K562 (cell line): ENCODE measurements at regions of chr1 and their contacts with region 1.

Region 1: DNA sequence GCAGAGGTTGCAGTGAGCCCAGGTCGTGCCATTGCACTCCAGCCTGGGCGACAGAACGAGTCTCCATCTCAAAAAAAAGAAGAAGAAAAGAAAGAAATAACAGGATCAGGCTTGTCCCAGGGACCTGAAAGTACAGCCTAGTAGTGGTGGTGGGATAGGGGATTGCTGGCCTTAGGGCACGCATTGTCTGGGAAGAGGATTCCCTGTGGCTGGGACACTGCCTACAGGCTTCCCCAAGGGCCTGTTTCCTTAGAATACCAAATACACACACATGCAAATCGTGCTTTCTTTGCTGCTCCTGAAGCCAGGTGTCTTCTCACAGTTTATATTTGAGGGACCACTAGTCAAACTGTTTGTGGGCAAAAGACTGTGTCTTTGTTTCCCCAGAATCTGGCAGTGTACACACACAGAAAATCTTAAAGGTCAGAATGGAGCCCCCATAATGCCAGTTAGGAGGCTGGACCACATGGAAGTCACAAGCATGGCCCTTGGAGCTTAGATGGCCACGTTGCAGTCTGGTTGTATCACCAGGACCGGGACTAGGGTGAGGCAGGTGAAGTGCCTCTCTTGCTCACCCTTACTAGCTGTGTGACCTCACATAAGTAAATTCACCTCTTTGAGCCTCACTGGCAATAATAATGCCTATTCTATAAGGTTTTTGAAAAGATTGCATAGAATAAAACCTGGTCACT is 12.7 kb upstream of the ASAP3 start:
- DNase-seq: no peak
- ATAC-seq: peak; percentile 46
- H3K4me3 ChIP-seq: no peak overlapping the region
- H3K27ac ChIP-seq: no peak overlapping the region
- H3K4me1 ChIP-seq: peaks cover 0 to 4% of the 10 kb centered on the region in 2 experiments; a peak in 1 of 5 replicates
- H3K27me3 ChIP-seq: no peaks in the 10 kb centered on the region
- CTCF ChIP-seq: no peak
- EP300 ChIP-seq: no peak
- POLR2A ChIP-seq: no peak
- RAD21 ChIP-seq: no peak

Region 2: GRCh38 chr1:23263380-23263887 is 233.2 kb before region 1 on chr1:
- CTCF ChIA-PET with region 1: no interaction called
- POLR2A ChIA-PET with region 1: no interaction called
- in situ Hi-C with region 1: no loop called
- intact Hi-C with region 1: no loop called
- DNase-seq: no peak
- ATAC-seq: no peak; the same call in 2 of the 3 replicates
- H3K4me3 ChIP-seq: no peak overlapping the region
- H3K27ac ChIP-seq: no peak overlapping the region
- H3K4me1 ChIP-seq: peaks cover 0 to 10% of the 10 kb centered on the region in 2 experiments; a peak in 3 of 5 replicates
- H3K27me3 ChIP-seq: no peaks in the 10 kb centered on the region
- CTCF ChIP-seq: no peak
- EP300 ChIP-seq: no peak
- POLR2A ChIP-seq: no peak
- RAD21 ChIP-seq: no peak

Region 3: GRCh38 chr1:23362218-23362713 is 134.4 kb before region 1 on chr1:
- CTCF ChIA-PET with region 1: no interaction called
- POLR2A ChIA-PET with region 1: no interaction called
- in situ Hi-C with region 1: no loop called
- intact Hi-C with region 1: no loop called
- DNase-seq: peak in 2 of 4 experiments; percentile 8 to 40
- ATAC-seq: 0 out of 3 replicates have a peak, but pooled peaks have one; percentile 25
- H3K4me3 ChIP-seq: no peak overlapping the region
- H3K27ac ChIP-seq: no peak overlapping the region
- H3K4me1 ChIP-seq: peaks cover 0 to 10% of the 10 kb centered on the region in 2 experiments; a peak in 3 of 5 replicates
- H3K27me3 ChIP-seq: no peaks in the 10 kb centered on the region
- CTCF ChIP-seq: no peak
- EP300 ChIP-seq: no peak
- POLR2A ChIP-seq: peak; percentile 37; the same call in 1 of the 2 replicates
- RAD21 ChIP-seq: no peak

Region 4: GRCh38 chr1:23484253-23485001 is 12.2 kb before region 1 on chr1:
- CTCF ChIA-PET with region 1: no interaction called
- POLR2A ChIA-PET with region 1: interaction called, 23 read pairs
- in situ Hi-C with region 1: no loop called
- intact Hi-C with region 1: no loop called
- DNase-seq: peak; percentile 98 to 99 (median 98)
- ATAC-seq: peak; percentile 93
- H3K4me3 ChIP-seq: peak overlapping the region; percentile 68
- H3K27ac ChIP-seq: peak overlapping the region; percentile 64; the same call in 2 of the 3 replicates
- H3K4me1 ChIP-seq: peaks cover 34 to 37% of the 10 kb centered on the region in 2 experiments
- H3K27me3 ChIP-seq: no peaks in the 10 kb centered on the region
- CTCF ChIP-seq: no peak
- EP300 ChIP-seq: no peak
- POLR2A ChIP-seq: peak; percentile 64
- RAD21 ChIP-seq: no peak

Region 5: GRCh38 chr1:23524716-23525401 is 28.2 kb after region 1 on chr1:
- CTCF ChIA-PET with region 1: no interaction called
- POLR2A ChIA-PET with region 1: interaction called, 23 read pairs
- in situ Hi-C with region 1: loop called (anchors 5 kb)
- intact Hi-C with region 1: no loop called
- DNase-seq: peak in 2 of 4 experiments; percentile 60 to 65
- ATAC-seq: no peak
- H3K4me3 ChIP-seq: no peak overlapping the region
- H3K27ac ChIP-seq: no peak overlapping the region
- H3K4me1 ChIP-seq: peaks cover 40 to 46% of the 10 kb centered on the region in 2 experiments
- H3K27me3 ChIP-seq: no peaks in the 10 kb centered on the region
- CTCF ChIP-seq: no peak
- EP300 ChIP-seq: no peak
- POLR2A ChIP-seq: no peak
- RAD21 ChIP-seq: no peak

Region 6: DNA sequence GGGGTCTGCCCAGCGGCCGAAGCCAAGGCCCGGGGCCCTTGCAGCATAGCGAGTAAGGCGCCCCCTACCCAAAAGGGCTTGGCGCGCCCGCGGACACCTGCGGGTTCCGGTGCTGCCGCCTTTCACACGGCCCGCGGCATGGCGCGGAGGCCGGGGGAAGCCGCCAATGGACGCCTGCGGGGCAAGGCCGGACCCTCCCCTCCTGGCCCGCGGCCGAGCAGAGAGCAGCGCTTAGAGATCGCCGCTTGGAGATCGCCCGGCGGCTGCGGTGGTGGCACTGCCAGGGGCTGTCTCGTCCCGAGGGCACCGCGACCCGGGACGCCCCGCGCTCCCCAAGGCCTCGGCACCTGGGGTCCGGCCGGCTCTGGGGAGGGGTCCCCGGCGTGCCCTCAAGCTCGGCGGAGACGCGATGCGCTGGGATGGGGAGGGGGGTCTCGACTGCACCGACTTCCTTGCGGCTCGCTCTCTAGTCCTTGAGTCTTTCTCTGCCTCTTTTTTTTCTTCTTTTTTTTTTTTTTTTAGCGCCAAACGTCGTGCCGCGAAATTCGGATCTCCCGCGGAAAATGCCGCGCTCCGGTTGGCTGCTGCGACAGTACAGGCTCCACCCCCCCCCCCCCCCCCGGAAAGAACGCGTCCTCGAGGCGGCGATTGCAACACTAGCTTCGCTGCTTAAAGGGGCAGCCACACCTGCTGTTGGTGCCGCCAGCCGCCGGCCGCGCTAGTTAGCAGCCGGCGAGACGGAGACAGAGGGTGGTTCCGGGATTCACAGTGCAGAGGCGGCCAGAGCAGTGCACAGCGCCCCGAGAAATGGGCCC is 34.3 kb after region 1 on chr1 and contains the start of gene E2F2:
- CTCF ChIA-PET with region 1: no interaction called
- POLR2A ChIA-PET with region 1: interaction called, 23 read pairs
- in situ Hi-C with region 1: loop called (anchors 5 kb)
- intact Hi-C with region 1: no loop called
- DNase-seq: peak; percentile 97 to 98 (median 97)
- ATAC-seq: peak; percentile 79
- H3K4me3 ChIP-seq: peak within 1 kb of the TSS; percentile 55
- H3K27ac ChIP-seq: peak within 1 kb of the TSS; percentile 88
- H3K4me1 ChIP-seq: peaks cover 49 to 50% of the 10 kb centered on the region in 2 experiments
- H3K27me3 ChIP-seq: no peaks in the 10 kb centered on the region
- CTCF ChIP-seq: peak; percentile 26 to 63 (median 50); a peak in 4 of 6 replicates
- EP300 ChIP-seq: 0 out of 2 replicates have a peak, but pooled peaks have one; percentile 14
- POLR2A ChIP-seq: peak; percentile 77
- RAD21 ChIP-seq: no peak
- polyA plus RNA-seq, gene E2F2: 3.8 to 4.0 TPM

Region 7: GRCh38 chr1:23634842-23635651 is 138.4 kb after region 1 on chr1:
- CTCF ChIA-PET with region 1: interaction called, 3 read pairs
- POLR2A ChIA-PET with region 1: interaction called, 3 read pairs
- in situ Hi-C with region 1: no loop called
- intact Hi-C with region 1: loop called (anchors 2 kb)
- DNase-seq: peak; percentile 76 to 87 (median 86)
- ATAC-seq: peak; percentile 82
- H3K4me3 ChIP-seq: peak overlapping the region; percentile 4; the same call in 1 of the 2 replicates
- H3K27ac ChIP-seq: peak overlapping the region; percentile 35; the same call in 1 of the 3 replicates
- H3K4me1 ChIP-seq: peaks cover 12 to 21% of the 10 kb centered on the region in 2 experiments; a peak in 3 of 5 replicates
- H3K27me3 ChIP-seq: peaks cover 3 to 17% of the 10 kb centered on the region in 2 experiments; a peak in 2 of 5 replicates
- CTCF ChIP-seq: peak; percentile 78 to 98 (median 97)
- EP300 ChIP-seq: no peak
- POLR2A ChIP-seq: no peak
- RAD21 ChIP-seq: peak; percentile 41 to 72